BJ (cell line): ENCODE measurements at regions of chr9 and their contacts with region 1.

Region 1: DNA sequence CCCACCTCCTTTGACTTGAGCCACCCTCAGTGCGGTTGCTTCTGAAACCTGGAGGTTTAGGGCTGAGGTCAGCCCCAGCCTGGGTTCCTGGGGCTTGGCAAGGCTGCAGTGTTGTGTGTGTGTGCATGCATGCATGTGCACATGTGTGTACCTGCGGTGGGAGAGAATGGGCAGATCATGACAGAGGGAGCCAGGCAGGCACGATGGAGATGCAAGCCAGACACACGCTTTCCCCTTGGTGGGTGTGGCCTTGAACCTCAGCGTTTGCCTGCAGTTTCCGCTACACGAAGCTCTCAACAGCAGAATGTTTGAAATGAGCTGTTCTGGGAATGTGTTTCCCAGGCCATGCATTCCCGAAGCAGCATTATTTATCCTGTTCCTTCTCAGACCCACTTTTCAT is 65.9 kb upstream of the RAPGEF1 start:
- DNase-seq: no peak
- H3K4me3 ChIP-seq: no peak overlapping the region
- H3K27me3 ChIP-seq: peaks cover 20% of the 10 kb centered on the region
- CTCF ChIP-seq: no peak

Region 2: GRCh38 chr9:131879181-131879910 is 73.5 kb after region 1 on chr9:
- CTCF ChIA-PET with region 1: no interaction called
- POLR2A ChIA-PET with region 1: interaction called, 13 read pairs
- DNase-seq: no peak
- H3K4me3 ChIP-seq: no peak overlapping the region
- H3K27me3 ChIP-seq: no peaks in the 10 kb centered on the region
- CTCF ChIP-seq: no peak